ENCODE measurements at regions of chr1 and their contacts with region 1.

Region 1: DNA sequence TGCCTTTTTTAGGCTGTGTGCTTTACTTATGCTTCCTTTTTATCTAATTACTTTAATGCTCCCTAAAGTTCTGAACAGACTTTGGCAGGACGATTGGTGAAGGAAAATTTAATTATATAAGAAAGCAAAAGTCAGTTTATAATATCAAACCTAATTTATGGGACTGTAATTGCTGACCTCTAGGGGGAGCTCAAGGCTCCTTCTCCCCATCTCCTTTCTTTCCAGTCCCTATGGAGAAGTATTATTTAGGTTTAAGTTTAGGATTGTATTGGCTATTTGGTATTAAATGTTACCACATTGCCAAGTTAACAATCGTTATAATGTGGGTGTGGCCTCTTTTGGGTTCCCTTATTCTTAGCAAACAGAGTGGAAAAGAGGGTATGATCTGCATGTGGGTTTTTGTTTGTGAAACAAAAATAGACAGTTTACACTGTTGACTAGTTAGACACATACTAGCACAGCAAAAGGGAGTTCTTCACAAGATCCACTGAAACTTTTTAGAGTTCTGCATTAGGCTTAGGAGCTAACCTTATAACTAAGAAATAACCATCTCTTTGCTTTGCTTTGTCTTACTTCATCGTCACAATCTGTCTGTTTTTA is 48.2 kb upstream of the TNFSF4 start:
- DNase-seq: peak; percentile 75
- H3K4me3 Mint-ChIP-seq: no peak overlapping the region
- H3K27ac Mint-ChIP-seq: no peak overlapping the region
- H3K4me1 Mint-ChIP-seq: no peaks in the 10 kb centered on the region
- H3K27me3 Mint-ChIP-seq: no peaks in the 10 kb centered on the region
- CTCF ChIP-seq: peak; percentile 83

Region 2: GRCh38 chr1:172733815-172734214 is 521.5 kb before region 1 on chr1:
- CTCF ChIA-PET with region 1: no interaction called
- POLR2A ChIA-PET with region 1: no interaction called
- intact Hi-C with region 1: no loop called
- DNase-seq: no peak
- H3K4me3 Mint-ChIP-seq: no peak overlapping the region
- H3K27ac Mint-ChIP-seq: no peak overlapping the region
- H3K4me1 Mint-ChIP-seq: no peaks in the 10 kb centered on the region
- H3K27me3 Mint-ChIP-seq: no peaks in the 10 kb centered on the region
- CTCF ChIP-seq: no peak

Region 3: DNA sequence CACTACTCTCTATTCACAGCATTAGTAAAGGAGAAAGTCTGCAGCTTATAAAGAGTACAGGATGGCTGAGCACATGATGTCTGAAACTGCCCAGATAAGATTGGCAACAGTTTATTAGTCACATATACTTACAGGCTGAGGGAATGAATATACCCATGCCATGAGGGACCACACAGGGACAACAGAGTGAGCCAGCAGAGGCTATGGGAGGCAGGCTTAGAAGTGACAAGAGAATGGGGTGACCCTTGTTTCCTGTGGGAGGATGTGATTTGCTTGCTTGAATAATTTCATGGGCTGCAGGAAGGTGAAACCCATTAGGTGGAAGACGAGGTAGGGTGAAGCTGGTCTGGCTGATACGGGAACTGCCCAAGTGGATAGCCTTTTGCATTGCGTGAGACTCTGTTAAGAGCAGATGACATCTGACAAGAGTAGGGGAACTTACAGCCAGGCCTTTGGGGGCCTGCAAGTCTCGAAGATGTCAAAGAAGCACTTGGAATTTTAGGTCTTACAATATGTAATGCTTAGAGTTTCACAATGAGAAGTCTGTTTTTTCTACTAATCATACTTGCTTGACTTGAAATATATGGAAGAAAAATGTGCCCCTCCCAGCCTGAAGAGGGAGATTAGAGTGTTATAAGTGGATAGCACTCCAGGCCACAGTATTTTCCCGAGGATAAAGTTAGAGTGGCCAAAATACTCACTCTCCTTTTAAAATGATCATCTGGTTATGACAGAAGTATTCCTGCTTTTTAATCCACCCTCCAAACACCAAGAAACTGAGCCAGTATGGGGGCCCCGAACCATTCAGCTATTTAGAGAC is 13.6 kb before region 1 on chr1:
- CTCF ChIA-PET with region 1: interaction called, 31 read pairs
- POLR2A ChIA-PET with region 1: interaction called, 4 read pairs
- intact Hi-C with region 1: no loop called
- DNase-seq: no peak
- H3K4me3 Mint-ChIP-seq: no peak overlapping the region
- H3K27ac Mint-ChIP-seq: no peak overlapping the region
- H3K4me1 Mint-ChIP-seq: no peaks in the 10 kb centered on the region
- H3K27me3 Mint-ChIP-seq: no peaks in the 10 kb centered on the region
- CTCF ChIP-seq: no peak

Region 4: DNA sequence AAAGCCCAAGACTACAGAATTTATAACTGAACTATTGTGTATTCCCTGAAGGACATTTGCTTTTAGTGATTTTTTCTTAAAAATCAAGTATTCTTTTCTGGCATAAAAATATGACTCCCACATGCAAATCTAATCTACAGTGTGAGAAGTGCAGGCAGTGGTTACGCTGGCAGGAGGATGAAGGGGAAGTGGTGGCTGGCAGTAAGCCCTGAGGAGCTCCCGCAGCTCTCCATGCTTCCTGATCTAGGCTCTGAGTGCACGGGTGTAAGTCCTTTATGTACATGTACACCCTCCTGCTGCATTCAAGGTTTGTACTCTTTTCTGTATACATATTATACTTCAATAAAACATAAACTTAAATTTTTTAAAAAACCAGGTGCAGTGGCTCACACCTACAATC is 154.3 kb after region 1 on chr1:
- CTCF ChIA-PET with region 1: interaction called, 6 read pairs
- POLR2A ChIA-PET with region 1: no interaction called
- intact Hi-C with region 1: loop called (anchors 5 kb)
- DNase-seq: peak; percentile 69
- H3K4me3 Mint-ChIP-seq: no peak overlapping the region
- H3K27ac Mint-ChIP-seq: peak overlapping the region; percentile 31
- H3K4me1 Mint-ChIP-seq: peaks cover 31% of the 10 kb centered on the region
- H3K27me3 Mint-ChIP-seq: no peaks in the 10 kb centered on the region
- CTCF ChIP-seq: no peak

Region 5: DNA sequence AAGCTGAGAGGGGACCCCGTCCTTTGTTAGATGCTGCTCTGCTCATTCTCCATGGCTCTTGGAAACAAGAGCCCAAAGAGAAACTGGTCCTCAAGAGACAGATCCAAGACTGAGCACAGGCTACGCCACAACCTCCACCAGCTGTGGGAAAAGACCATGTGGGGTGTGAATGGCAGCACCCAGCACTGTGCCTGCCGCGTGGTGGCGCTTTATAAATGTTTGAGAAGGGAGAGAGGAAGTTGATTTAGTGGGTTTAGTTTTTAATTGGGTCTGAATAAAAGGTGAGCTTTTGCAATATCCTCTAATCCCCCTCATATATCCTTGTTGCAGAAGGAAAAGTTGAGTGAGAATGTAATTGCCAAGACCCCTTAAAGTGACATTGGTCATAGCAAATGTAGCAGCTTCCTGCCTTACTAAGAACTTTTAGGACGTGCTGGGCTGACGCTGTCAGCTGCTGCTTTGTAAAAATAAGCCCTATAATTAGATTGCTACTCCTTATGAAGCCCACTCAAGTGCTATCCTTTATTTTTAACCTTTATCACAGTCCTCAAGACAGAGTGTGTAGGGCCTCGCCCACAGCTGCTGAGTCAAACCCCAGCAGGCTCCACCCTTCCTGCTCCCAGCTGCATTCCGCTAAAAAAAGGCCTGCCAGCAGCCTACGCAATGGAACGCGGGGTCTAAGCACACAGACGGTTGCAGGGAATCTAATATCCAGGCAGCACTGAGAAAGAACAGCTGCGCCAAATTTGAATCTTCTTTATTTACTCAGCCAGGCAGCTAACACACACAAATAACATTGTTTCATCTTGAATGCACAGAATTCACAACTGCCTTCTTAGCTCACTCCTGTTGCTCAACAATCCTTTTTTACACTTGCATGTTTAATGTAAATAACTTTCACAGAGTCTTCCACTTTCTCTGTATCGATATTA is 174.4 kb after region 1 on chr1:
- CTCF ChIA-PET with region 1: interaction called, 6 read pairs
- POLR2A ChIA-PET with region 1: no interaction called
- intact Hi-C with region 1: loop called (anchors 1 kb)
- DNase-seq: peak; percentile 91
- H3K4me3 Mint-ChIP-seq: peak overlapping the region; percentile 60
- H3K27ac Mint-ChIP-seq: peak overlapping the region; percentile 93
- H3K4me1 Mint-ChIP-seq: peaks cover 43% of the 10 kb centered on the region
- H3K27me3 Mint-ChIP-seq: no peaks in the 10 kb centered on the region
- CTCF ChIP-seq: peak; percentile 39

Measured in MCF 10A (cell line).